ENCODE measurements at regions of chr9 and their contacts with region 1.

Region 1: DNA sequence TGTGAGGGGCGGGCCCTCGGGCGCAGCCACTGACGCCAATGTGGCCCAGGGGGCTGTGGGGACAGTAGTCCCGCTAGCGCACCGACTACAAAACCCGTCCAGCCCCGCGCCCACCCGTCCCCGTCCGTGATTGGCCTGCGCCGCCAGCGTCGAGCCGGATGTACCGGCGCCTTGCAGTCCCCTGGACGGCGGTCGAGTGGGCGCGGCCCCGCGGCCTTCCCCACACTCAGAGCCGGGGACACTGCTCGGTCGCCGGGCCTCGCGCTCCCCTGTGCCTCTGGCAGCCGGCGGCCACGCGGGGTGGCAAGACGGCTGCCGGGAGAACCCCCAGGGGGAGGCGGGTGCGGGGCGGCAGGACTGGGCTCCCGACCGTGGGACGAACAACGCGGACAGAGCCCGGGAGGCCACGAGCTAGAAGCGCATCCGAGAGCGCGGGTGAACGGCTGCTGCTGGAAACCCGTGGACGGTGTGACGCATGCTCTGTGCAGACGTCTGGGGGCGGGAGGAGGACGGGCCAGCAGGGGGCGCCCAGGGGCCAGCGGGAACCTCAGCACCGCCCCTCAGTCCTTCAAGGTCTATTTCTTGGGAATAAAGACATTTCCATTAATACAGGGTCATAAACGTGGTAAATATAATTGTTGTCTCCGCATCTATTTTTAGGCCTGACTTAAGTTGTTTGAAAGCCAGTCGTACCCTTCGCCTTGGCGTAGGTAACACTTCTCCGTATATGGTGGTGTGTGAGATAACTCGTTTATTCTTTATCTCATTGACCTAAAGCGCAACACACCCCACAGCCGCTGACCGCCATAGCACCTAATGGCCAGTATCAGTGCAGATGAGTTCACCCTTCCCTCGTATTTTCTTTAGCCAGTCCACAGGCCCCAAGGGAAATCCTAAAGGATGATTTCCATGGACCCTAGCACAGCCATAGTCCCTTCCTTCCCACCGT is 629 bp upstream of the BICD2 start:
- DNase-seq: peak; percentile 99
- H3K4me3 ChIP-seq: peak overlapping the region; percentile 71 to 99 (median 88)
- H3K27ac ChIP-seq: peak overlapping the region; percentile 97 to 100 (median 99)
- H3K4me1 ChIP-seq: peaks cover 0 to 46% (median 41%) of the 10 kb centered on the region in 4 donors
- H3K27me3 ChIP-seq: no peaks in the 10 kb centered on the region
- CTCF ChIP-seq: peak; percentile 87 to 96 (median 90)
- EP300 ChIP-seq: no peak
- POLR2A ChIP-seq: peak; percentile 69 to 78

Region 2: DNA sequence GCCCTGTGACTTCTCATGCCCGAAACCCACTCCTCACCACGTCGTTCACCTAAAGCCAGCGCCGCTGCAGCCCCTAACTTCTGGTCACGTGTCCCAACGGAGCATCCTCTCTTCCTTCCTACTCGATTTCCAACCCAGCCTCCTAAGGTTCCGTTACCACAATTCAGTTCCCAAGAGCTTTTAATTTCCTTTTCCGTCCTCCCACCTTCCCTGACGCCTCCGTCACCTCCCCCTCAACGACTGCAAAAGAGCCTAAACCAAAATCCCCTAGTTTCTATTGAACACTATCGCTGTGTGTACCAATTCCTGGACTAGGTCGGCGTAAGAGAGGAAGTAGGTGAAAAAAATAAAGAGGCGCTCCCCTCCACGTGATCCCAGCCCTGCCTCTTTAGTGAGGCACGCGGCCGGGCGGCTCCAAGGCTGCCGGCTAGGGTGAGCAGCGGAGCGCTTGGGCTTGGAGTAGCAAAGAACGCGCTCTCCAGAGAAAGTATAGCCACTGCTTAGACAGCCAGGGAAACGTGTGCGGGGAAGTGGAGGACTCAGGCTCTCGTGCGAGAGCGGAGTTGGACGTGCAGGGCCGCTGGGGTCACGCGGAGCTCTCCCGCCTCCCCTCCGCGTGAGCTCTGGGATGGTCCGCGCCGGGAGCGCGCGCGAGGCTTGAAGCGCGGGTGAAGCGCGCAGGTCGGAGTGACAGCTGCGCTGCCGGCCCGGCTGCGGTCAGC is 439.8 kb before region 1 on chr9 and contains the starts of genes CENPP and NOL8:
- intact Hi-C with region 1: loop called (anchors 10 kb)
- DNase-seq: peak; percentile 90
- H3K4me3 ChIP-seq: peak within 1 kb of the TSS; percentile 66 to 84 (median 71)
- H3K27ac ChIP-seq: peak within 1 kb of the TSS; percentile 90 to 96 (median 92)
- H3K4me1 ChIP-seq: peaks cover 0 to 21% (median 16%) of the 10 kb centered on the region in 4 donors
- H3K27me3 ChIP-seq: no peaks in the 10 kb centered on the region
- CTCF ChIP-seq: no peak
- EP300 ChIP-seq: peak in 1 of 4 donors; percentile 2
- POLR2A ChIP-seq: peak in 1 of 2 donors; percentile 31
- total RNA-seq, gene CENPP: 1.8 to 11.9 (median 5.2) TPM
- total RNA-seq, gene NOL8: 23.9 to 32.1 (median 28.2) TPM

Region 3: GRCh38 chr9:92669890-92670708 is 95.2 kb before region 1 on chr9 and contains the start of gene IPPK:
- intact Hi-C with region 1: loop called (anchors 2 kb)
- DNase-seq: peak; percentile 99
- H3K4me3 ChIP-seq: peak within 1 kb of the TSS; percentile 79 to 96 (median 86)
- H3K27ac ChIP-seq: peak within 1 kb of the TSS; percentile 85 to 94 (median 90)
- H3K4me1 ChIP-seq: peaks cover 0 to 36% (median 25%) of the 10 kb centered on the region in 4 donors
- H3K27me3 ChIP-seq: no peaks in the 10 kb centered on the region
- CTCF ChIP-seq: no peak
- EP300 ChIP-seq: peak in 1 of 4 donors; percentile 33
- POLR2A ChIP-seq: peak; percentile 78 to 79
- total RNA-seq, gene IPPK: 5.7 to 12.5 (median 6.9) TPM

Region 4: GRCh38 chr9:92716557-92716956 is 48.7 kb before region 1 on chr9:
- intact Hi-C with region 1: loop called (anchors 10 kb)
- DNase-seq: no peak
- H3K4me3 ChIP-seq: no peak overlapping the region
- H3K27ac ChIP-seq: peak overlapping the region in 1 of 4 donors; percentile 3
- H3K4me1 ChIP-seq: no peaks in the 10 kb centered on the region
- H3K27me3 ChIP-seq: no peaks in the 10 kb centered on the region
- CTCF ChIP-seq: peak; percentile 89 to 92 (median 92)
- EP300 ChIP-seq: no peak
- POLR2A ChIP-seq: no peak

Region 5: DNA sequence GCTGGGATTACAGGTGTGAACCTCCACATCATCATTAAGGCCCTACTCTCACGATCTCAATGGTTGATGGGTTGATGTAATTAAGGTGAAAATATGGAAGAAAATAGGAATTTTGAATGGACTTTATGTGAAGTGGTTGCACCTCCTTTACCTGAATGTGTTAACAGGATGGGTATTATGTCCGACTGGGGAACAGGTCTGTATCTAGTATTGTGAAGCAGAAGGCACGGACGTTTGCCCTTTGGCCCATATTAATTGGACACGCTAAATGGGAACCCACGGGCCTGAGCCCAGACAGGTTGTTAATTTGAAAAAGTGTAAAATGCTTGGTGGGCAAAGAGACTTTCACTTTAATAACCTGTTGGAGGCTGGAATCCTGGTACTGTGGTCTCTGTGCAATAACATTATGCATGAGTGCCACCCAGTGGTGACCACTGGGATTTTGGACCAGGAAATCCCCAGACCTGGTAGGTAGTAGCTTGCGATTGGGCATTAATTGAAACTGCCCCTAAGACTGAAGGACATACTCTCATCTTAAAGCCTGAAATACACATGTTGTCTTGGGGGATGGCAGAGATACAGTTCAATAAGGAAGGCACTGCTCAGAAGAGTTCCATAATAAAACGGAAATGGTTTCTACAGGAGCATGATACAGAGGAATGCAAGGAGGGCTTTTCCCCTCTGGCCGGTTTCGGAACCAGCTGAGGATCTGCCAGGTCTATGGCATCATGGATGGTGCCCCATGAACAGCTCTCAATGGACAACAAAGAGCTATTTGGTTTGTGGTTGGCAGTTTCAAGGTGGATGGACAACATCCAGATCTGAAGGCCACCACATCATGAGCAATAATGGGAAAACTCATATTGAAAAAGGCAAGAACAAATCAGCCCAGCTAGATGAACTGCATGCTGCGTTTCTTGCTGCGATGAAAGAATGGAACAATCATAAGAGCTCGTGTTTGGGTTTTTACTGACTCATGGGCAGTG is 25.6 kb after region 1 on chr9:
- intact Hi-C with region 1: loop called (anchors 2 kb)
- DNase-seq: peak; percentile 81
- H3K4me3 ChIP-seq: no peak overlapping the region
- H3K27ac ChIP-seq: no peak overlapping the region
- H3K4me1 ChIP-seq: peaks cover 0 to 5% (median 0%) of the 10 kb centered on the region in 4 donors
- H3K27me3 ChIP-seq: peaks cover 0 to 7% (median 0%) of the 10 kb centered on the region in 3 donors
- CTCF ChIP-seq: peak; percentile 76 to 88 (median 86)
- EP300 ChIP-seq: no peak
- POLR2A ChIP-seq: no peak

Region 6: GRCh38 chr9:93095205-93096130 is 330.2 kb after region 1 on chr9:
- intact Hi-C with region 1: loop called (anchors 10 kb)
- DNase-seq: peak; percentile 100
- H3K4me3 ChIP-seq: peak overlapping the region; percentile 36 to 100 (median 92)
- H3K27ac ChIP-seq: peak overlapping the region; percentile 94 to 99 (median 98)
- H3K4me1 ChIP-seq: peaks cover 0 to 56% (median 48%) of the 10 kb centered on the region in 4 donors
- H3K27me3 ChIP-seq: no peaks in the 10 kb centered on the region
- CTCF ChIP-seq: no peak
- EP300 ChIP-seq: no peak
- POLR2A ChIP-seq: peak; percentile 65 to 76